ENCODE measurements at regions of chr17 and their contacts with region 1.

Region 1: GRCh38 chr17:41496820-41497408 is 7.2 kb upstream of the KRT36 start:
- DNase-seq: peak; percentile 48 to 61
- ATAC-seq: peak; percentile 67 to 90 (median 82)
- H3K4me3 ChIP-seq: no peak overlapping the region
- H3K27ac ChIP-seq: peak overlapping the region in 1 of 10 donors; percentile 89
- H3K4me1 ChIP-seq: peaks cover 0 to 57% (median 0%) of the 10 kb centered on the region in 9 donors
- H3K27me3 ChIP-seq: peaks cover 0 to 32% (median 16%) of the 10 kb centered on the region in 7 donors
- CTCF ChIP-seq: peak; percentile 28 to 84 (median 61)

Region 2: DNA sequence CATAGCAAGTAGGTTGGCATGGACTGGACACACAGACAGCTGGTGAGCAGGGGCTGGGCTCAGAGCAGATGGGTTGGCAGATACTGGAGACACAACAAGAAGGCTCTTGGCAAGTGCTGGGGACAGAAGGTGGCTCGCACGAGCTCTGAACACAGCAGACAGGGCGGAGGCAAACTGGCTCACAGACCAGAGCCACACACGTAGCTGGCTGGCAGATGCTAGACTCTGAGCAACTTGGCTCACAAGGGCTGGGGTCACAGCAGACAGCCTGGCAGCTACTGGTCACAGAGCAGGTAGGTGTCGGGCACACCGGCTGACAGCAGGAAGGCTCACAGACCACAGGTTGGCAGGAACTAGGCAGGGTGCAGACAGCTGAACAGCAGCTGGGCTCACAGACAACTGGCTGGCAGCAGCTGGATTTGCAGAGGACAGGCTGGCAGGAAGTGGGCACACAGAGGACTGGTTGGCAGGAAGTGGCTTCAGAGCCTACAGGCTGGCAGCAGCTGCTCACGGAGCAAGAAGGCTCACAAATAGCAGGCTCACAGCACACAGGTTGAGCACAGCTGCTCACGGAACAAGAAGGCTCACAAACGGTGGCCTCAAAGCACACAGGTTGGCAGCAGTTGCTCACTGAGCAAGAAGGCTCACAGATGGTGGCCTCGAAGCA is 188.5 kb before region 1 on chr17:
- intact Hi-C with region 1: loop called in 1 of 10 experiments (anchors 10 kb)
- DNase-seq: peak; percentile 34 to 70
- ATAC-seq: peak; percentile 84 to 95 (median 90)
- H3K4me3 ChIP-seq: peak overlapping the region in 2 of 10 donors; percentile 14 to 24
- H3K27ac ChIP-seq: peak overlapping the region in 3 of 10 donors; percentile 3 to 85 (median 34)
- H3K4me1 ChIP-seq: peaks cover 0 to 26% (median 4%) of the 10 kb centered on the region in 9 donors
- H3K27me3 ChIP-seq: peaks cover 0 to 28% (median 8%) of the 10 kb centered on the region in 7 donors
- CTCF ChIP-seq: no peak

Region 3: DNA sequence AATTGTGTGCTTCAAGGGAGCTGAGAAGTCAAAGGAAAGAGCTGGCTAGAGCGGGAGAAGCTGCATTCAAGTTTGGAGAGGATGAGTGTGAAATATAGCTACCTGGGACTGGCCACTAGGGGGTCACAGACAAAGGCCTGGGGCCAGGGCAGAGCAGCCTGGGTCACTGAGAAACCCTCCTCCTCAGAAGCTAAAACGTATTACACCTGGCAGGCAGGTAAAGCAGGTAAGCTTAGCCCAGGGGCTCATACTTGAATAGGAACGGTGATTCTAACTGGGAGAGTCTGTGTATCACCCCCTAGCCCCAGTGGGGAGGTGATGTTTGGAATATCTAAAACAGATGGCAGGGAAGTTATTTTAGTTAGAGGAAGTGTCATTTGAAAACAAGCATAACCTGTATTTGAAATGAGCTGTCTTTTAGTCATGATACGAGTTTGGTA is 79.3 kb before region 1 on chr17:
- intact Hi-C with region 1: loop called in 1 of 10 experiments (anchors 10 kb)
- DNase-seq: no peak
- ATAC-seq: no peak
- H3K4me3 ChIP-seq: no peak overlapping the region
- H3K27ac ChIP-seq: no peak overlapping the region
- H3K4me1 ChIP-seq: peaks cover 0 to 22% (median 7%) of the 10 kb centered on the region in 9 donors
- H3K27me3 ChIP-seq: peaks cover 0 to 5% (median 0%) of the 10 kb centered on the region in 7 donors
- CTCF ChIP-seq: peak in 2 of 9 donors; percentile 10 to 20

Region 4: GRCh38 chr17:41428591-41429291 is 68.2 kb before region 1 on chr17:
- intact Hi-C with region 1: no loop called
- DNase-seq: no peak
- ATAC-seq: no peak
- H3K4me3 ChIP-seq: no peak overlapping the region
- H3K27ac ChIP-seq: no peak overlapping the region
- H3K4me1 ChIP-seq: peaks cover 0 to 2% (median 0%) of the 10 kb centered on the region in 9 donors
- H3K27me3 ChIP-seq: peaks cover 0 to 20% (median 13%) of the 10 kb centered on the region in 7 donors
- CTCF ChIP-seq: no peak